Dendritic cell treated with granulocyte-macrophage colony-stimulating factor and Interleukin-4, amounts not matched to agents 40 ng/mL and 50 ng/mL, for 4 days (primary cell): ENCODE measurements at regions of chr1 and their contacts with region 1.

Region 1: DNA sequence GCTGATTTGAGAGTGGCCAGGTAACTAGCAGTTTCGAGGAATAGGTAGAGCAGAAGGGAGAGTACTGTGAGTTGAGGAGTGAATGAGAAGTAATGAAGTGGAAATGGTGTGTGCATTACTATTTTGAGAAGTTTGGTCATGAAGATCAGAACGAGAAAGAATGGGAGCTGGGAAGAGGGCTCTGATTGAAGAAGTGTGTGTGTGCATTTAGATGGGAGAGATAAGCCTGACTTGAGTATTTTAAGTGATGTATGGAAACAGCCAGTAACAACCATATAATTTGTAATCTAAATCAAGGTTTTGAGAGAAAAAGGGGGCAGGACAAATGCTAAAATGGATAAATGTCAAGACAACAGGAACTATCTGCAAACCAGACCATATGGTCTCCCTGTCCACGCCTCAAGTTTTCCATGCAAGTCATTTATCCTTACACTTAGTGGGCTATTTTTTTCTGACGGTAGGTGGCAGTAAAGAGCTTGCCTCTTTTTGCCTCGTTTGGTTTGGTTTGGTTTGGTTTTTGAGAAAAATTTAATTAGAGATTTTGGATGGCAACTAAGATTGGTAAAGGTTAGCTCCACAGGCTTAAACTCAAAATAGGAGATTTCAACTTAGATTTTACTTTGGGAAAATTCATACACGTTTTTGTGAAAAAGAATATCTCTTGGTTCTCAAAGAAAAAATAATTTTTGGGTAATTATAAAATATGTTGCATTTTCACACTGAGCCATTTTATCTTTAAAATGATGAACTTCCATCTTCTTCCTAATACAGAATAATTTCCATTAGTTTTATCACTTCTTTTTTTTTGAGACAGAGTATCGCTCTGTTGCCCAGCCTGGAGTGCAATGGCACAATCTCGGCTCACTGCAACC is 9.5 kb upstream of the B3GALNT2 start:
- H3K4me3 Mint-ChIP-seq: no peak overlapping the region
- H3K27ac Mint-ChIP-seq: no peak overlapping the region
- H3K4me1 Mint-ChIP-seq: peaks cover 7% of the 10 kb centered on the region
- H3K27me3 Mint-ChIP-seq: peaks cover 9% of the 10 kb centered on the region

Region 2: DNA sequence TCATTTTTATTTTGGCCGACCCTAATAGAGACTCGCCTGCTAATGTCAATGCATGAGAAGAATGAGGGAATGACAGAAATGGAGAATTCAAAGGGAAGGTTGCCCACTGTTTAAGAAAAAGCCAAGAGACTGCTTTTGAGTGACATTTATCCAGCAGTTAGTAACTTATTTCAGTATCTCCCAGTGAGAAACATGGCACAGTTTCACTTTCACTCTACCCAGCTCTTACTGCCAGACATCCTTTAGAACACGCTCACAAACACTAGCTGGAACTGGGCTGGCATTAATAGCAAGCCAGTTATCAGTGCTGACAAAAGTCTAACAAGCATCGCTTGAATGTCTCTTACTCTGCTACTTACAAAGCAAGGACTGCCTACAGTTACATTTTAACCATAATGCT is 176.8 kb before region 1 on chr1:
- intact Hi-C with region 1: no loop called
- H3K4me3 Mint-ChIP-seq: peak overlapping the region; percentile 17
- H3K27ac Mint-ChIP-seq: peak overlapping the region; percentile 34
- H3K4me1 Mint-ChIP-seq: peaks cover 10% of the 10 kb centered on the region
- H3K27me3 Mint-ChIP-seq: no peaks in the 10 kb centered on the region

Region 3: DNA sequence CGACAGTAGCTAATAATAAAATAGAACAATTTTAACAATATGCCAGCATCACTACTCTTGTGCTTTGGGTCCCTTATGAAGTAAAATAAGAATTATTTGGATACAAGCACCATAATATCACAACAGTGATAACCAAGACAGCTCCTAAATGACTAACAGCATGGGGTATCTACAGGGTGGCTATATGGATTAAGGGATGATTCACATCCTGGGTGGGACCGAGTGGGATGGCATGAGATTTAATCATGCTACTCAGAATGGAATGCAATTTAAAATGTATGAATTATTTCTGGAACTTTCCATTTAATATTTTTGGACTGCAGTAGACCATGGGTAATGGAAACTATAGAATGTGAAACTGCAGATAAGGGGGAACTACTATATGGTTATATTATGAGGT is 18.6 kb after region 1 on chr1:
- intact Hi-C with region 1: no loop called
- H3K4me3 Mint-ChIP-seq: no peak overlapping the region
- H3K27ac Mint-ChIP-seq: no peak overlapping the region
- H3K4me1 Mint-ChIP-seq: no peaks in the 10 kb centered on the region
- H3K27me3 Mint-ChIP-seq: no peaks in the 10 kb centered on the region

Region 4: GRCh38 chr1:235601104-235601503 is 87.4 kb after region 1 on chr1:
- intact Hi-C with region 1: loop called (anchors 10 kb)
- H3K4me3 Mint-ChIP-seq: no peak overlapping the region
- H3K27ac Mint-ChIP-seq: no peak overlapping the region
- H3K4me1 Mint-ChIP-seq: no peaks in the 10 kb centered on the region
- H3K27me3 Mint-ChIP-seq: peaks cover 3% of the 10 kb centered on the region

Region 5: DNA sequence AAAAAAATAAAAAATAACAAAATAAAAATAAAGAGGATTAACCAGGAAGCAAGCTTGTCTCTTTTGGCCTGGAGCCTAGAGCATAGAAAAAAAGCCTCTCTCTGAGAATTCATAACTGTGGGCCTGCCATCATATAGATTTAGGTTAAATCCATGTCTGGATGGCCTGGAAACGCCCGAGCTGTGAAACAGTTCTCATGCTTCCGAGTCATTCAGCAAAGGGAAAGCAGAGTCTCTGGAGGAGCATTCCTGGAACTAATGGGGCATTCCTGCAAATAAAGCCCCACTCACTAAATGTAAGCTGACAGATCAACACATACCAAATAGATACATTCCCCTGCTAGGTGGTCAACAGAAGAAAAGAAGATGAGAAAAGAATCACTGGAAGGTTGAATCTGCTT is 211.7 kb after region 1 on chr1:
- intact Hi-C with region 1: no loop called
- H3K4me3 Mint-ChIP-seq: no peak overlapping the region
- H3K27ac Mint-ChIP-seq: peak overlapping the region; percentile 36
- H3K4me1 Mint-ChIP-seq: no peaks in the 10 kb centered on the region
- H3K27me3 Mint-ChIP-seq: no peaks in the 10 kb centered on the region